Prostate gland (tissue), 2 donors: ENCODE measurements at regions of chr12 and their contacts with region 1.

Region 1: GRCh38 chr12:55926738-55927587 is 731 bp downstream of the PYM1 start:
- DNase-seq: peak; percentile 85
- H3K4me3 ChIP-seq: peak overlapping the region; percentile 73 to 93
- H3K27ac ChIP-seq: peak overlapping the region; percentile 94 to 97
- H3K4me1 ChIP-seq: peaks cover 2% of the 10 kb centered on the region
- H3K27me3 ChIP-seq: no peaks in the 10 kb centered on the region
- CTCF ChIP-seq: peak; percentile 67 to 80 (median 72)
- POLR2A ChIP-seq: peak; percentile 66

Region 2: DNA sequence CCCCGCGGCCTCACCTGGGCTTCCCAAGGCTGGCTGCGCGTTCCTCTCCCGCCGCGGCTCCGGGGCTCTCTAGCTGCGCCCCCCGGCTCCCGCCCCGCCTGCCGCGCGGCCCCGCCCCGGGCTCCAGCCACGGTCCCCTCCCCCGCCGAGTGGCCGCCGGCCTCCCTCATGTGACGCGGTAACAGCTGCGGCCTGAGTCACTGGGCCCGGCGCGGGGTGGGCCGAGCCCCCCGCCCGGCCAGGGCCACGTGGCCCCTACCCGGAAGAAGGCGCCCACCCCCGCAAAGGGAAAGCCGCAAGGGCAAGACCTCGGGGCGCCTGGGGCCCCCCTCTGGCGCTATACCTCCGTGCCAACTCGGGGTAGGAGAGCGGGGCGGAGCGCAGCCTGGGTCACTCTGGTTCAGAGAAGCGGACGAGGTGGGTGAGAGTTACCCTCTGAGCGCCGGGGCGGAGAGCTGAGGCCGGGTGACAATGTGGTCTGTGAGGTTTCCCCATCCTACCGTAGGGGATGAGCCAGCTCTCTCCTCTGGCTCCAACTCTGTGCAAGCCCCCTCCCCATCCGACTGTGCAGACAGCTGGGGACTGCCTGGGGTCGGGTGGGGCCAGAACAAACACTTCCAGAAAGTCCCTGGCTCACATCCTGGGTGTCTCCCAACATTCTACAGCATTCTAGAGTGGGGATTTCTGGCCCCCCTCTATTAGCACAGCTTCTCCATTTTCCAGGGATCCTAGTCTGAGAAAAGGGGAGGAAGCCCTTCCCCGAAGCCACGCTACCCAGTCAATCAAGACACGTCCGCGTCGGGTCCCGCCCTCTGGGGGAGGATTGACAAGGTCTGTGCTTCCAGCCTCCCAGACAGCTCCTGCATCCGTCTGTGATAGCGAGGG is 197.8 kb before region 1 on chr12 and contains the start of gene CD63:
- intact Hi-C with region 1: loop called (anchors 5 kb)
- DNase-seq: peak; percentile 93
- H3K4me3 ChIP-seq: peak within 1 kb of the TSS; percentile 88 to 94
- H3K27ac ChIP-seq: peak within 1 kb of the TSS; percentile 99
- H3K4me1 ChIP-seq: peaks cover 9% of the 10 kb centered on the region
- H3K27me3 ChIP-seq: no peaks in the 10 kb centered on the region
- CTCF ChIP-seq: peak in 1 of 4 experiments; percentile 14
- POLR2A ChIP-seq: peak; percentile 83
- total RNA-seq, gene CD63: 485 to 585 TPM

Region 3: DNA sequence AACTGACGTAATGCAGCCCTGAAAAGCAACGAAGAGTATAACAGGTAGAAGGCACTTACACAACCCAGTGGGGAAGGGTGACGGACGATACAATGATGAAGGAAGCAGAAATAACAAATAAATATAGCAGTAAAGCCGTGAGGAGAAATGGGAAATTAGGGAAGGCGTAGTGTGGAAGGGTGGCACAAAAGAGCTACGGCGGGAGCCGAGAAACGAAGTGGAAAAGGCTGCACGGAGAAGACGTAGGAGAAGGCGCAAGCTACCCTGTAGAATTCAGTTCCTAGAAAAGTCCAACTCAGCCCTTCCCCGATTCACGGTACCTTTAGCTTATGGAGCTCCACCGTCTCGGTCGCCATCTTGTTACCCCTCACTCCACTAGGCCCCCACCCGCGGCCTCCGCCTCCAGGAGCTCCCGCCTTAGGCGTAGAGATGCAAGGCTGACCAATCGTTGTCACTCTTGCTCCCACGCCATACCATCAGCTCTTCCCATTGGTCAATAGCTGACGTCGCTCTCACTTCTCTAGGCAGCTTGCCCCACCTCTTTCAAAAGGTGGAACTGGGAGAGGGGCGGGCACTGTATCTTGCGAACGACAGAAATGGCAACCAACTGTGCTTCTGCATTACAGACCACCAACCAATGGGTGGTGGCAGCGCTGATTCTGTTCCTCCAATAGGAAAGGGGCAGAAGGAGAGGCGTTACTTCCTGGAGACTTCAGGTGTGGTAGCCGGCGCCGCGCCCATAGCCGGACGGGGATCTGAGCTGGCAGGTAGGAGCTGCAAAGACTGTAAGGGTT is 109.4 kb before region 1 on chr12 and contains the starts of genes ORMDL2 and SARNP:
- intact Hi-C with region 1: loop called (anchors 5 kb)
- DNase-seq: peak; percentile 100
- H3K4me3 ChIP-seq: peak within 1 kb of the TSS; percentile 67 to 86
- H3K27ac ChIP-seq: peak within 1 kb of the TSS; percentile 86 to 92
- H3K4me1 ChIP-seq: peaks cover 5% of the 10 kb centered on the region
- H3K27me3 ChIP-seq: no peaks in the 10 kb centered on the region
- CTCF ChIP-seq: no peak
- POLR2A ChIP-seq: peak; percentile 91
- total RNA-seq, gene ORMDL2: 23.1 to 29.3 TPM
- total RNA-seq, gene SARNP: 65.9 to 75.9 TPM

Region 4: GRCh38 chr12:55829967-55830600 is 96.9 kb before region 1 on chr12:
- intact Hi-C with region 1: loop called (anchors 2 kb)
- DNase-seq: peak; percentile 27
- H3K4me3 ChIP-seq: peak overlapping the region; percentile 52 to 88
- H3K27ac ChIP-seq: peak overlapping the region; percentile 82 to 96
- H3K4me1 ChIP-seq: peaks cover 12% of the 10 kb centered on the region
- H3K27me3 ChIP-seq: no peaks in the 10 kb centered on the region
- CTCF ChIP-seq: no peak
- POLR2A ChIP-seq: no peak

Region 5: GRCh38 chr12:56034589-56035332 is 107.8 kb after region 1 on chr12:
- intact Hi-C with region 1: no loop called
- DNase-seq: no peak
- H3K4me3 ChIP-seq: no peak overlapping the region
- H3K27ac ChIP-seq: no peak overlapping the region
- H3K4me1 ChIP-seq: no peaks in the 10 kb centered on the region
- H3K27me3 ChIP-seq: no peaks in the 10 kb centered on the region
- CTCF ChIP-seq: no peak
- POLR2A ChIP-seq: no peak

Region 6: DNA sequence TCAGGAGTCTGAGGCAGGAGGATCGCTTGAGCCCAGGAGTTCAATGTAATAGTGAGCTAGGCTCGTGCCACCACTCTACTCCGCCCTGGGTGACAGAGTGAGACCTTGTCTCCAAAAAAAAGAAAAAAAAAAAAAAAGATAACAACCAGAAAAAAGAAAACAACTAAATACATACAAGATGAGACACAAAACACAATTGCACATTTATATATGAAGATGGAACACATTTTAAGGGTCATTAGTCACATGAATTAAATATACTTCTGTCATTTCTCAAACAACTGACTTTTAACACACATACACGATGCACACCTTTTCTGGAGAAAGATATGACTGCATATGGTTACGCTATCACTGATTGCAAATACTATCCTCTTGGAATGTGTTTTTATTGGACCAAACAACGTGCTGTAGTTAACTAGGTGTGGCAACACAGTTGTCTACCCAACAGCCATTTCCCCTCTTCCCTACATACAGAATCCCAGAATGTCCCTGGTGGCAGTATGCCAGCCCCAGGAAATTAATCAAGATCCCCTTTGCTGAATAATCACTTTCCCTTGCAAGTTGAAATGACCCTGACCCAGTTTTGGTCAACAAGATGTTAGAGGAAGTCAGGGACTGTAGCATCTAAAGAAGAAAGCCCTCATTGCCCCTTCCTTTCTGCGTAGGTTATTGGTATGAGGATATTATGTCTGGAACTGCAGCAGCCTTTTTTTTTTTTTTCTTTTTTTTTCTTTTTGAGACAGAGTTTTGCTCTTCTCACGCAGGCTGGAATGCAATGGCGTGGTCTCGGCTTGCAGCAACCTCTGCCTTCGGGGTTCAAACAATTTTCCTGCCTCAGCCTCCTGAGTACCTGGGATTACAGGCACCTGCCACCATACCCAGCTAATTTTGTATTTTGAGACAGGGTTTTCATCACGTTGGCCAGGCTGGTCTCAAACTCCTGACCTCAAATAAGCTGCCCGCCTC is 219.8 kb after region 1 on chr12:
- intact Hi-C with region 1: no loop called
- DNase-seq: no peak
- H3K4me3 ChIP-seq: no peak overlapping the region
- H3K27ac ChIP-seq: no peak overlapping the region
- H3K4me1 ChIP-seq: peaks cover 5% of the 10 kb centered on the region
- H3K27me3 ChIP-seq: no peaks in the 10 kb centered on the region
- CTCF ChIP-seq: no peak
- POLR2A ChIP-seq: no peak